ENCODE measurements at regions of chr15 and their contacts with region 1.

Region 1: GRCh38 chr15:53159458-53159857 is 369.3 kb upstream of the ONECUT1 start:
- DNase-seq: no peak
- H3K4me3 Mint-ChIP-seq: no peak overlapping the region
- H3K27ac Mint-ChIP-seq: no peak overlapping the region
- H3K4me1 Mint-ChIP-seq: no peaks in the 10 kb centered on the region
- H3K27me3 Mint-ChIP-seq: peaks cover 13% of the 10 kb centered on the region
- CTCF ChIP-seq: no peak

Region 2: GRCh38 chr15:53080484-53080883 is 79.0 kb before region 1 on chr15:
- CTCF ChIA-PET with region 1: no interaction called
- intact Hi-C with region 1: loop called (anchors 5 kb)
- DNase-seq: no peak
- H3K4me3 Mint-ChIP-seq: no peak overlapping the region
- H3K27ac Mint-ChIP-seq: no peak overlapping the region
- H3K4me1 Mint-ChIP-seq: no peaks in the 10 kb centered on the region
- H3K27me3 Mint-ChIP-seq: peaks cover 9% of the 10 kb centered on the region
- CTCF ChIP-seq: no peak

Measured in Calu3 (cell line).